Calu3 (cell line): ENCODE measurements at regions of chr11 and their contacts with region 1.

Region 1: DNA sequence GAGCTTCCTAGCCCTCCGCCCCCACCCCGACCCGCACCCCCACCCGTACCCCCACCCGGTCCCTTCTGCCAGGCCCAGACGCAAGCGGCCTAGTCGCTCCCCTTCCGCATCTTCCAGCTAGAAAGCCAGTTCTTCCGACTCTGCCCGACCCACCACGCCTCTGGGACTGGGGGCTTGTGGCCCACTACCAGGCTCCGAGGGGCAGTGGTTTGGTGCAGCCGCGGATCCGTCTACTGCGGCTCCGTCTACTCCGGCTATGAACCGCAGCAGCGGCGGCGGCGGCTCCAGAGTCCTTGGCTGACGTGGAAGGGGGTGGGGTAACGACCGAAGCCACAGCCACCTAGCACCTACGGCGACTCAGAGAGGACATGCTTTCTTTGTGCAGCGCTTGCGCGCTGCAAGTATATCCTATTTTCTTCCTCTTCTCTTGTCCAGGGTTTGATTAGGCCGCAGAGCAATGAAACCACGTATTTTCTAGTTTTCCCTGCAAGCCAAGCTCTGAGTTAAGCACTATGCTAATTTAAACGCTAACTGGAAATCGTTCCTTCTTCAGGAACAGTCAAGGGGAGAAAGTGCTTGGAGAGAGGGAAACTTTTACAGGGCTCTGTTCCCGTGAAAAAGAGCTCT is at the start of gene COPB1:
- DNase-seq: peak; percentile 91
- H3K4me3 Mint-ChIP-seq: peak within 1 kb of the TSS; percentile 79
- H3K27ac Mint-ChIP-seq: peak within 1 kb of the TSS; percentile 67
- H3K4me1 Mint-ChIP-seq: no peaks in the 10 kb centered on the region
- H3K27me3 Mint-ChIP-seq: no peaks in the 10 kb centered on the region
- CTCF ChIP-seq: no peak
- total RNA-seq, gene COPB1: 92.1 and 95.5 TPM in 2 replicates

Region 2: DNA sequence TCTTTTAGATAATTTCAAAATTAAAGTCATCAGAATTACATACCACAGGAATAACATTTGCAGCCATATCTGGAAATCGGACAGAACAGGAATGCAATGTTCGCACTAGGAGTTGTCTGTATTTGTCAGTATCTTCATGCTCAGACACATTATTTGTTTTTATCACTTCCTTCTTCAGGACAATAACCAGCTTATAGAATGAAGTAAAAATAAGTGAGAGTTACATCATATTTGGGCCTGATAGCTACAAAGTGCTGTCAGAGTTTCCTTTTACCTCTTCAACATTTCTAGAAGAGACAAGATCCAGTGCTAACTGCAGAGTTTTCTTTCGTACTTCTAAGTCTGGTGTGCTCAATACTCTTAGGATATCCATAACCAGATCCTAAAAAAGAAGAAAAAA is 19.0 kb before region 1 on chr11:
- CTCF ChIA-PET with region 1: no interaction called
- intact Hi-C with region 1: loop called (anchors 1 kb)
- DNase-seq: no peak
- H3K4me3 Mint-ChIP-seq: no peak overlapping the region
- H3K27ac Mint-ChIP-seq: peak overlapping the region; percentile 30
- H3K4me1 Mint-ChIP-seq: no peaks in the 10 kb centered on the region
- H3K27me3 Mint-ChIP-seq: no peaks in the 10 kb centered on the region
- CTCF ChIP-seq: no peak